AG04449 (cell line): ENCODE measurements at regions of chr2 and their contacts with region 1.

Region 1: GRCh38 chr2:37877457-37878315 is 47.4 kb upstream of the RMDN2 start:
- DNase-seq: no peak
- H3K4me3 ChIP-seq: no peak overlapping the region
- CTCF ChIP-seq: peak; percentile 38

Region 2: GRCh38 chr2:37389989-37390765 is 487.5 kb before region 1 on chr2:
- CTCF ChIA-PET with region 1: interaction called, 400 read pairs
- POLR2A ChIA-PET with region 1: interaction called, 3 read pairs
- DNase-seq: no peak
- H3K4me3 ChIP-seq: no peak overlapping the region; the same call in 1 of the 2 replicates
- CTCF ChIP-seq: no peak

Region 3: DNA sequence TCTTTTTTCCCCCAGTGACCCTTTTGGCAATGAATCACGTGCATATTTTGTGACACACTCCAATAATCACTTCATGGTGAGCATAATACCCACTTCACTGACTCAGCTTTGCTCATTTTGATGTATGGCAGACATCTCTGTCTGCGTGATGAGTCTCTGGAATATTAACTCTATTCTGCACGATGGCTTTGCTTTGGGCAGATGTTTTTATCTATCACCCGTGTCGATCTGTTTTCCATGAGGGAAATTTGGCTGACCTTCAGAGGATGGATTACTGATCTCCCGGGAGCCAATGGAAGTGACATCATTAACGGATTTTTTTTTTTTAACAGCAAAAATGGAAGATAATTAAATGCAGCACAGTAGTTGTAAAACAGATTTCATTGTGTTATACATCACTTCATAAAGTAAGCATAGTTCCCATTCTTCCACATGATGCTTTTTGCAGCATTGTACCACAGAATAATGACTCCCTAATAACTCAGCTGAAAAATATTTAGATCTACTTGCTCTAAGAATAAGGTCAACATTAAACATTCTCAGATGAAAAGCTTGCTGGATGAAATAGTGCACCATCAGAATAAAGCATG is 236.0 kb before region 1 on chr2:
- CTCF ChIA-PET with region 1: interaction called, 24 read pairs
- POLR2A ChIA-PET with region 1: interaction called, 3 read pairs
- DNase-seq: no peak
- H3K4me3 ChIP-seq: no peak overlapping the region
- CTCF ChIP-seq: no peak

Region 4: GRCh38 chr2:37711308-37711731 is 166.4 kb before region 1 on chr2:
- CTCF ChIA-PET with region 1: interaction called, 10 read pairs
- POLR2A ChIA-PET with region 1: no interaction called
- DNase-seq: peak; percentile 86
- H3K4me3 ChIP-seq: no peak overlapping the region
- CTCF ChIP-seq: no peak

Region 5: DNA sequence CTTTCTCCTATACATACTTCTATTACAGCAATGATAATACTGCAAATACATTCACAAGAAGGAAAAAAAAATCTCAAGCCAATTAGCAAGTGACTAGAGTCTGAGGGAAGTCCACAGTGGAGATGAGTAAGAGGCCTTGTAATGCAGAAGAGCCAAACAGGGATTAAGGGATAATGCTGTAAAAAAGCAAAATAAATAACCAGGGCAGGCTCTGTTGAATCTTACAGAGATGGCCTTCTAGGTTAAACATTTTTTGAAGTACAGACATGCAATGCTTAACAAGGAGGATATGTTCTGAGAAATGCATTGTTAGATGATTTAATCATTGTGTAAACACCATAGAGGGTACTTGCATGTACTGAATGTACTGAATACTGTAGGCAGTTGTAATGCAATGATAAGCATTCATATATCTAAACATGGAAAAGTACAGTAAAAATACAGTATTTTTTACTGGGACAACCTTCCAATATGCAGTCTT is 74.7 kb before region 1 on chr2:
- CTCF ChIA-PET with region 1: interaction called, 11 read pairs
- POLR2A ChIA-PET with region 1: no interaction called
- DNase-seq: peak; percentile 99
- H3K4me3 ChIP-seq: no peak overlapping the region
- CTCF ChIP-seq: no peak

Region 6: GRCh38 chr2:37851828-37852584 is 25.7 kb before region 1 on chr2:
- CTCF ChIA-PET with region 1: interaction called, 10 read pairs
- POLR2A ChIA-PET with region 1: no interaction called
- DNase-seq: no peak
- H3K4me3 ChIP-seq: no peak overlapping the region
- CTCF ChIP-seq: no peak